Endothelial cell of umbilical vein (primary cell): ENCODE measurements at regions of chr11 and their contacts with region 1.

Region 1: GRCh38 chr11:8566613-8567210 is 27.3 kb downstream of the STK33 start:
- DNase-seq: peak; percentile 50
- H3K4me3 ChIP-seq: no peak overlapping the region
- H3K27ac ChIP-seq: no peak overlapping the region
- H3K4me1 ChIP-seq: peaks cover 3% of the 10 kb centered on the region
- H3K27me3 ChIP-seq: peaks cover 6 to 7% of the 10 kb centered on the region in 2 experiments
- CTCF ChIP-seq: peak; percentile 19 to 28
- POLR2A ChIP-seq: no peak

Region 2: DNA sequence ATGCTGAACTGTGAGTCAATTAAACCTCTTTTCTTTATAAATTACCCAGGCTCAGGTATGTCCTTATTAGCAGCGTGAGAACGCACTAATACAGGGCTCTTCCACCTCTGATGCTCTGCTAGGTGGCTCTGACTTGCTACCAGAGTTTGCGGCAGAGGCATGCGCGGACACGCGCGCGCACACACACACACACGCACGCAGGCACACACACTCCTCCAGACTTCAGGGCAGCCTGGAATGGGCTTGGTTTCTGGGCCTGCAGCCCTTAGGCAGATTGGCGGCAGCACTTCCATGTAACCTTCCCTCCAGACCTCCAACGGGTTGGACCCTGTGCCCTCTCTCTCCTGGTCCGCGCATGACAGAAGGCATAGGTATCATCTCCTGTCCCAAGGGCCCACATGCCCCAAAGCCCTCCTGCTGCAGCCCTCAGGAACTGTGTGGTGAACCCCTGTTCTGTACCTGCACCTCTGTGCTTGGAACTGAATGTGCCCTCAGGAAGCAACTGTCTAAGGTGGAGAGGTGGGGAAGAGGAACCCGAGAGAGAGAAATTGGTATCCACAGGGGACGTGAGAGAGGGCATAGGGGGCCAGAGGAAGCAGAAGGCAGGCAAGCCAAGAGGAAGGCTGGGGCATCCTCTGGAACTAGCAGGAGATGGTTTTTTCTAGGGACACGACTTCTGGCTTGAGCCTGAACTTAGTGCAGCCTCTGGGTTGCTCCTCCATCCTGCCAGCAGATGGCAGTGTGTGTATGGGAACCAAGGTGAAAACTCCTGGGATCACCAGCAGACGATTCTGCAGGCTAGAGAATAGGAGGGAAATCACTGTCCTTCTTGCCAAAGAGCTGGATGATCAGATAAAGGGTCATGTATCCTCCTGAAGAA is 374.5 kb before region 1 on chr11:
- CTCF ChIA-PET with region 1: interaction called, 52 read pairs
- POLR2A ChIA-PET with region 1: no interaction called
- dilution Hi-C with region 1: no loop called
- intact Hi-C with region 1: loop called (anchors 1 kb)
- DNase-seq: peak; percentile 60
- H3K4me3 ChIP-seq: no peak overlapping the region
- H3K27ac ChIP-seq: no peak overlapping the region
- H3K4me1 ChIP-seq: no peaks in the 10 kb centered on the region
- H3K27me3 ChIP-seq: peaks cover 2 to 11% of the 10 kb centered on the region in 2 experiments
- CTCF ChIP-seq: peak; percentile 76 to 89
- POLR2A ChIP-seq: no peak

Region 3: GRCh38 chr11:8225589-8226036 is 341.1 kb before region 1 on chr11:
- CTCF ChIA-PET with region 1: interaction called, 39 read pairs
- POLR2A ChIA-PET with region 1: no interaction called
- dilution Hi-C with region 1: no loop called
- intact Hi-C with region 1: loop called (anchors 1 kb)
- DNase-seq: peak; percentile 68
- H3K4me3 ChIP-seq: no peak overlapping the region
- H3K27ac ChIP-seq: no peak overlapping the region
- H3K4me1 ChIP-seq: no peaks in the 10 kb centered on the region
- H3K27me3 ChIP-seq: peaks cover 0 to 3% of the 10 kb centered on the region in 2 experiments
- CTCF ChIP-seq: peak; percentile 84 to 90
- POLR2A ChIP-seq: no peak

Region 4: GRCh38 chr11:8338138-8338537 is 228.6 kb before region 1 on chr11:
- CTCF ChIA-PET with region 1: interaction called, 9 read pairs
- POLR2A ChIA-PET with region 1: no interaction called
- dilution Hi-C with region 1: no loop called
- intact Hi-C with region 1: loop called (anchors 1 kb)
- DNase-seq: peak; percentile 29
- H3K4me3 ChIP-seq: no peak overlapping the region
- H3K27ac ChIP-seq: no peak overlapping the region
- H3K4me1 ChIP-seq: no peaks in the 10 kb centered on the region
- H3K27me3 ChIP-seq: no peaks in the 10 kb centered on the region
- CTCF ChIP-seq: peak; percentile 69 to 85
- POLR2A ChIP-seq: no peak

Region 5: DNA sequence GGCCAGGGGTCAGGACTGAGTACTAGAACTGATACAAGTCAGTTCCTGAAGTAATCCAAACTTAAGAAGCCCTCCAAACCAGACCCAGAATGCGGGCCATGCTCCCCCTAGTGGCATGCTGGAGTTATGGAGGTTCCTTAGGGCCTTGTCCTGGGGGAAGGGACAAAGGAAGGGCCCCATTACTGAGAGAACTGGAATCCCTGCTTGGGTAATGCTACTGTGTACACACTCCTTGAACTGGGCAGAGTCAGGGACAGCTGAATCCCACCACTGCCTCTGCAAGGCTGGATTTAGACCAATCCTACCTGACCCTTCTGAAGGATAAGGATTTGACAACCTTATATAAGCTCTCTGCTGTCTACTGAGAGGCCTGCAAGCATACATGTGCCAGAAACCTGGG is 246.9 kb after region 1 on chr11:
- CTCF ChIA-PET with region 1: interaction called, 6 read pairs
- POLR2A ChIA-PET with region 1: no interaction called
- dilution Hi-C with region 1: no loop called
- intact Hi-C with region 1: loop called (anchors 2 kb)
- DNase-seq: peak; percentile 81
- H3K4me3 ChIP-seq: no peak overlapping the region
- H3K27ac ChIP-seq: peak overlapping the region; percentile 37
- H3K4me1 ChIP-seq: peaks cover 15% of the 10 kb centered on the region
- H3K27me3 ChIP-seq: no peaks in the 10 kb centered on the region
- CTCF ChIP-seq: peak; percentile 90 to 96
- POLR2A ChIP-seq: no peak